Activated CD8-positive, alpha-beta T cell treated with anti-CD3 and anti-CD28 coated beads for 36 hours (primary cell): ENCODE measurements at regions of chr13 and their contacts with region 1.

Region 1: DNA sequence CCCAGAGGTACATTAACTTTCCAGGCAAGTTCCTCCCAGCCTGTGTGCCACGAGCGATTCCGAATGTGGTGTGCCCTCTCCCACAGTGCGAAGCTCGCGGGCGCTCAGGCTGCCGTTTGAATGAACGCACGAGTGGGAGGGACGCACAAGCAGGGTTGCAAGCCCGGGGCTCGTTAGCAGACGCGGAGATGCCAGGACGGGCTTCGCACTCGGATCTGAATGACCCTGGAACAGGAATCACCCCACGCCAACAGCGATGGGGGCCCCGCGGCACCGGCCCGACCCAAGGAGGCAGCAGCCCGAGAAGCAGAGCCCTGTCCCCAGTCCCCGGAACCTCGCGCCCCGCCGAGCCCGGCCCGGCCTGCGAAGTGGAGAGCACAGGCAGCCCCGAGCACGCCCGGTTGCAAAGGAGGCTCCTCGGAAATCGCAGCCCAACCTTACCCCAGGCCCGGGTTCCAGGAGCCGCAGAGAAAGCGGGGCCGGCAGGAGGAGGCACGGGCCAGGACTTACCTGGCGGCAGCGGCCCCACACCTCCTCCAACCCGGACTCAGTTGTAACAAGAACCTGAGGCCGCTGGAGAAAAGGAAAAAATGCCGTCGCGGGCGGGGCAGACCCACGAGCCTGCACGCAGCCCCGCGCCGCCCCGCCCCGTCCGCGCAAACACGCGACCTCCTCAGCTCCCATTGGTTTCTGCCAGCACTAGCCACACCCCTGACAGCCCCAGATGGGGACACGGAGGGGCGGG is at the start of gene SLC25A30:
- DNase-seq: peak; percentile 94
- ATAC-seq: peak; percentile 92
- H3K4me3 Mint-ChIP-seq: peak within 1 kb of the TSS; percentile 86
- H3K27ac Mint-ChIP-seq: peak within 1 kb of the TSS; percentile 94
- H3K4me1 Mint-ChIP-seq: peaks cover 18% of the 10 kb centered on the region
- H3K27me3 Mint-ChIP-seq: no peaks in the 10 kb centered on the region
- CTCF ChIP-seq: no peak
- total RNA-seq, gene SLC25A30: 18.9 to 21.2 TPM

Region 2: DNA sequence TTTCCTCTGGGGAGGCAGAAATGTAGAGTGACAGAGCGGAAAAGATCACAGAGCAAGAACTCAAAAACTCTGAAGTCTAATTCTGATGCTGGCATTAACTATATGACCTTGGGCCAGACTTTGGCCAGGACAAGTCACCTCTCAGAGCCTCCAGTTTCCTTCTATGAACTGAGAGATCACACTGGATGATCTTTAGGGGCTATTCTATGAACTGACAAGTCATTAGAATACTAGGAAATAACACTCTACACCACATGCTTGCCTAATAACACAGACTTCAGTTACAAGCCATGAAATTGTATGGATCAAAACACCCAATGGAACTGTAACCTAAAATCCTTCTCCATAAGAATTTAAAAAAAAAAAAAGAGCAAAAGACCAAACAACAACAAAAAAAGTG is 16.6 kb before region 1 on chr13:
- CTCF ChIA-PET with region 1: interaction called, 17 read pairs
- POLR2A ChIA-PET with region 1: interaction called, 28 read pairs
- intact Hi-C with region 1: no loop called
- DNase-seq: no peak
- ATAC-seq: peak; percentile 31
- H3K4me3 Mint-ChIP-seq: no peak overlapping the region
- H3K27ac Mint-ChIP-seq: peak overlapping the region; percentile 79
- H3K4me1 Mint-ChIP-seq: peaks cover 40% of the 10 kb centered on the region
- H3K27me3 Mint-ChIP-seq: no peaks in the 10 kb centered on the region
- CTCF ChIP-seq: no peak

Region 3: GRCh38 chr13:45448965-45449559 is 31.1 kb after region 1 on chr13:
- CTCF ChIA-PET with region 1: no interaction called
- POLR2A ChIA-PET with region 1: no interaction called
- intact Hi-C with region 1: no loop called
- DNase-seq: no peak
- ATAC-seq: no peak
- H3K4me3 Mint-ChIP-seq: no peak overlapping the region
- H3K27ac Mint-ChIP-seq: no peak overlapping the region
- H3K4me1 Mint-ChIP-seq: no peaks in the 10 kb centered on the region
- H3K27me3 Mint-ChIP-seq: no peaks in the 10 kb centered on the region
- CTCF ChIP-seq: no peak

Region 4: DNA sequence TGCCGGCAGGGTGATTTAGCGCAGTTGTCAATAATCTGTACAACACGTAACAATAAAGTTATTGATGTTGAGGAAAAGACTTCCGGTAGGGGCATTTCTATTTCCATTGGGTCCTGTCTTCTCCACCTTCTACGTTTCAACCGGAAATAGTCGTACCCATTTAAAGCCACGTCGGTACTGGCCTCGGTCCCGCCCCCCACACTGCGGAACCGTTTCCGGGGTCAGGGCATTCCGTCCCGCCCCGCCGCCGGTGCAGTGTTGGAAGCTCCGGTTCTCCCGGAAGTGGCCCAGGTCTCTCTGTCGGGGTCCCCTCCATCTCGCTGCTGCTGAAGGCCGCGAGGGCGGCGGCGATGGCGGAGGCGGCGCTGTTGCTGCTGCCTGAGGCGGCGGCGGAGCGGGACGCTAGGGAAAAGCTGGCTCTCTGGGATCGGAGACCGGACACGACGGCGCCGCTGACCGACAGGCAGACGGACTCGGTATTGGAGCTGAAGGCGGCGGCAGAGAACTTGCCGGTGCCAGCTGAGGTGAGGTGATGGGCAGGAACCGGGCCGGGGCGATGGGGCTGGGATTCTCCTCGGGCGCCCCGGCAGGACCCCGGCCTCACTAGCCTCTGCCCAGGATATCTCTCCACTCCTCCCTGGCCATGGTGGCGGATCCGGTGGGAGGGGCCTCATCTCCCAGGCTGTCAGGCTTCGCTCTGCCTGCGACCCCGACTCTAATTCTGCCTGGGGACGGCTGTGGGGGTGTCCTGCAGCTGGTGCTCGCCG is 46.9 kb after region 1 on chr13 and contains the start of gene COG3:
- CTCF ChIA-PET with region 1: interaction called, 3 read pairs
- POLR2A ChIA-PET with region 1: interaction called, 11 read pairs
- intact Hi-C with region 1: no loop called
- DNase-seq: peak; percentile 97
- ATAC-seq: peak; percentile 98
- H3K4me3 Mint-ChIP-seq: peak within 1 kb of the TSS; percentile 93
- H3K27ac Mint-ChIP-seq: peak within 1 kb of the TSS; percentile 95
- H3K4me1 Mint-ChIP-seq: peaks cover 43% of the 10 kb centered on the region
- H3K27me3 Mint-ChIP-seq: no peaks in the 10 kb centered on the region
- CTCF ChIP-seq: no peak
- total RNA-seq, gene COG3: 19.9 to 22.1 TPM